Astrocyte of the cerebellum (primary cell): ENCODE measurements at regions of chr4 and their contacts with region 1.

Region 1: GRCh38 chr4:105998171-105998589 is 102.9 kb downstream of the NPNT start:
- DNase-seq: no peak
- H3K4me3 ChIP-seq: no peak overlapping the region
- CTCF ChIP-seq: no peak

Region 2: DNA sequence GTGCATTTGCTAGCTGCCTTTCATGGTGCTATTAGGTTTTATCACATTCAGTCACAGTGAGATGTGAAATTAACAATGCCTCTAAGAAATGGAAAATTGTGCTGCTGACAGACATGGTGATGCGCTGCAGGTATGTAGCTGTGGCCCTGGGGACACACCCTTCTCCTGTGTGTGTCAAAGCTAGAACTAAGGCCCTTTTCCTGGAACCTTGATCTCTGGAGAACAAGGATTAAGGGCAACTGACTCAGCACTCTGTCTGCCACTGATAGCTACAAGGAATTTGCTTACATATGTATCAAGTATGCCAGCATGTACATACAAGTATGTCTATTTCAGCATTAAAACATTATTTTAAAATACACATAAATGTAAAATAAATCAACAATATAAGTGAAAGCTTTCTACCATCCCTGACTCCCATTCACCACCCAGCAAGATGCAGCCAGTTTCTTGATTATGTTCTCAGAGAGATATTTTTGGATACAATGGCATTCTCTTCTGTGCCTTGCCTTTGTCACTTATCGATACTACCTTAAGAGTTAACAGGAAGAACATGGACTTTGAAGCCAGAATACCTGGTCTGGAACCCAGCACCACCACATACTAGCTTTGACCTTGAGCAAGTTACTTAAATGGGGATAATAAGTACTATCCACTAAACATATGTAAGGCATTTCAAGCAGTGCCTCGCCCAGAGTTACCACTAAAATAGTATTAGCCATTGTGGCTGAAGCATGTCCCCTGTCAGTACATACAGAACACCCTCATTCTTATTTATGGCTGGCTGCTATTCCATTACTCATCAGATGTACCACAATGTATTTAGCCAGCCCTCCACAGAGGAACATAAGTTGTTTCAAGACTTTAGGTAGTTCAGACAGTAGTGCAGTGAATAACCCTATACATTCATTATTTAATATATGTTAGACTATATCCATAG is 34.4 kb before region 1 on chr4:
- in situ Hi-C with region 1: loop called (anchors 5 kb)
- DNase-seq: no peak
- H3K4me3 ChIP-seq: no peak overlapping the region
- CTCF ChIP-seq: no peak

Region 3: DNA sequence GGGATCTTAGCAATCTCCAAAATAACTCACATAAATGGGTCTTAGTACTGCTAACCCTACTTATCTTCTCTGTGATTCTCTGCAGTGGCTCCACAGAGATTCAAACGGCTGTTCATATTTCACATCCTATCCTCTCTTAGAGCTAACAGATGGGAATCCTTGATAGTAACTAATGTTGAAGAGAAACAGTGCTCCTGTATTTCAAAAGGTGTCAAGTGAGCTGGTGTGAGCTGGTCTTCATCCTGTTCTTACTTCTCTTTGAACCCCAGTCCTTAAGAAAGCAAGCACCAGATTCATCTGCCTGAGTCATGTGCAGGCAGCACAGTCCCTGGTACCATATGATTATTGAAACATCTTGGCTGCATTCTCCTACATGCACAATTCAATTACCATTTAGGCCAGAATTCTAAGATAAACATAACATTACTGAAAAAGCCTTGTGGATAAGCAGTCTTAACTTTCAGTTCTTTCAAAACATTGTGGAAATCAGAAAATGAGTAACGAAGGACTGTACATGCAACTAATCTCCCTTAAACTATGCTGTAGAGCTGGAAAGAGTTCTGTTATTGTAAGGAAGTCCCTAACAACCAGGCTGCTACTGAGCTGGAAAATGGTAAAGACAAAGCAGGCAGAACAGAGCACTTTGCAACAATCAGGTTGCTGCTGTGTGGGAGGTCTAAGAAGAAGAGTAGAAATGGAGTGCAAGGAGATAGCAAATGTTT is 50.2 kb after region 1 on chr4:
- in situ Hi-C with region 1: no loop called
- DNase-seq: no peak
- H3K4me3 ChIP-seq: no peak overlapping the region
- CTCF ChIP-seq: no peak

Region 4: DNA sequence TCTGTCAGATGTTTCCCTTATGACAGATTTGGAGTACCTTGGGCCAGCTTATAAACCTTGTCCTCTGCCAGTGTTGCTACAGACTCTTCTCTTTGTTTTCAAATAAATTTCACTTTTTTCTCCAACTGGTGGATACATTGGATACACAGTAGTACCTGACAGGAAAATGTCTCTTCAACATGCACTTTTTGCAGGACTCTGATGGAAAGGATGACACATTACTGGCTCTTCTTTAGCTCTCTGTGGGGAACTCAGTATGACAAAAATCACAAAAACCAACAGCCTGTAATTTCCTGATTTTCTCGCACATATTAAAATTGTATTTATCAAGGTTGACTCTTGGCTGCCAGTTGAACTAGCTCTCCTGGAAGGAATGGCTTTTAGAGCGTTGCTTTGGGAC is 431.7 kb after region 1 on chr4:
- in situ Hi-C with region 1: no loop called
- DNase-seq: no peak
- H3K4me3 ChIP-seq: no peak overlapping the region
- CTCF ChIP-seq: no peak